Astrocyte of the cerebellum (primary cell): ENCODE measurements at regions of chr1 and their contacts with region 1.

Region 1: DNA sequence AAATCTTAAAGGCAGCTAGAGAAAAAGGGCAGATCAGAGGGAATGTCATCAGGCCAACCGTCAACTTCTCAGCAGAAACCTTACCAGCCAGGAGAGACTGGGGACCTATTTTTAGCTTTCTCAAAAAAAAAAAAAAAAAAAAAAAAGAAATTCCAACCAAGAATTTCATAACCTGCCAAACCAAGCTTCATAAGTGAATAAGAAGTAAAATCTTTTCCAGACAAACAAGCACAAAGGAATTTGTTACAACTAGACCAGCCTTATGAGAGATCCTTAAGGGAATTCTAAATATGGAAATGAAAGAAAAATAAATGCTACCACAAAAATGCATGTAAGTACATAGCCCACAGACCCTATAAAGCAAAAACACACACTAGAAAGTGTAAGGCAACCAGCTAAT is 267.7 kb downstream of the AKT3 start:
- DNase-seq: peak; percentile 52
- H3K4me3 ChIP-seq: no peak overlapping the region
- CTCF ChIP-seq: no peak

Region 2: GRCh38 chr1:243475966-243476365 is 106.4 kb before region 1 on chr1:
- in situ Hi-C with region 1: loop called (anchors 5 kb)
- DNase-seq: peak; percentile 77
- H3K4me3 ChIP-seq: no peak overlapping the region
- CTCF ChIP-seq: peak; percentile 61

Region 3: DNA sequence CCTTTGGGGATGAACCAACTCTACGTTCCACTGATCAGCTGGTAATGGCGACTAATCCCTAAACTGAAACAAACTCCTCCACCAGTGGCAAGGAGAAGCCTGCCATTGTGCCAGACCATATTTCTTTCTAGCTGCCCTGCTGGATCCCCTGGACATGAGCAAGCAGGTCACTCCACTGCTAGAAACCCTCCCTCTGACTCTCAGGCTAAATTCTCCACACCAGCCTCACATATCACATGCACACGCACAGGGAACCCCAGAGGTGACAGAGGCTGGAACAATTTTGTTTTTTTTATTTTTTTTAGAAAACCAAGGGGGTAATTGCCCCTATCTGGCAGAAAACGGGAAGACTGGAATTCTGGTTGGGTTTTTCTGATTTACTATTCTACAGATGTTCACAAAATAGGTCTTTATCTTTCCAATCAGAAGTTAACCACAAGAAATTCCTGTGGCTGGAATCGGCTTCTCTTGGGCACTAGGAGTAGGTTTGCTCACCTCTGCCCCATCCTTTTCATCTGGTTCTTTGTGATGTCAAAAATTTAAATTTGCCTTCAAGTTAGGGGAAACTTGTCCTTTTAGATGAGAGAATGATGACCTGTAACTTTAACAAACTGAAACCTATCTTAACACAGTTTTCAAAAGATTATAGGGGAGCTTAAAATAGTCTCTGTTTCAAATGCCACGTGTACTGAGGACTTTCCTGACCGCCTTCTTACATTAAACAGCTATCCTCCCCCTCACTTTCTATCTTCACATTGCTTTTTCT is 68.4 kb before region 1 on chr1:
- in situ Hi-C with region 1: no loop called
- DNase-seq: peak; percentile 55
- H3K4me3 ChIP-seq: no peak overlapping the region
- CTCF ChIP-seq: no peak

Region 4: DNA sequence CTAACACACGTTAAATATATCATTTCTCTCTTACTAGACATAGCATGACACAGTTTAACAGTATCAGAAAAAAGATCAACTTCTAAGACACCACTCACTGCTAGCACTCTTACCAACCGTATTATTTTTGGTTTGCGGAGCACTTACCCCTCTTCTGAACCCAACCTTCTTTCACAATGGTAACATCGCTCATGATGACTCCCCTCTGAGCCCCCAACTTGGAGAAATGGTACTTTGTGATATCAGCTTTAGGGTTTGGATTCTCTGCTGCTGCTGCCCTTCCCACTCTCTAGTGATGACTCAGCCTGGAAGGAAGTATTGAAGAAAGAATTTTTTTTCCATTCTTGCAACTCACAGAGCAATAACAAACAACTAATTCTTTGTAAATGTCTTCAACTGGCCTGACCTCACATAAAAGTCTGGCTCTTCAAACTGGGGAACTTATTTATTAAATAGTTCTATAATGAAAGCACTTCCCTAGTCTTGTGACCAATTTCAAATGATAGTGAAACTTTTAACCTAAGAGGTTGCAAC is 260.7 kb after region 1 on chr1:
- in situ Hi-C with region 1: no loop called
- DNase-seq: peak; percentile 29
- H3K4me3 ChIP-seq: no peak overlapping the region
- CTCF ChIP-seq: no peak